A549 (cell line): ENCODE measurements at regions of chr5 and their contacts with region 1.

Region 1: GRCh38 chr5:39080597-39081204 is 6.5 kb upstream of the RICTOR start:
- DNase-seq: peak; percentile 64 to 92
- ATAC-seq: peak; percentile 62 to 74; a peak in 4 of 6 replicates
- H3K4me3 ChIP-seq: no peak overlapping the region
- H3K27ac ChIP-seq: peak overlapping the region; percentile 11 to 57; a peak in 5 of 6 replicates
- H3K4me1 ChIP-seq: peaks cover 45% of the 10 kb centered on the region
- CTCF ChIP-seq: peak; percentile 81
- EP300 ChIP-seq: no peak
- POLR2A ChIP-seq: no peak
- RAD21 ChIP-seq: peak; percentile 71 to 79

Region 2: GRCh38 chr5:39005566-39006232 is 75.0 kb before region 1 on chr5:
- CTCF ChIA-PET with region 1: interaction called, 33 read pairs
- POLR2A ChIA-PET with region 1: no interaction called
- DNase-seq: peak; percentile 6 to 68
- ATAC-seq: peak; percentile 90 to 94; a peak in 5 of 6 replicates
- H3K4me3 ChIP-seq: no peak overlapping the region
- H3K27ac ChIP-seq: no peak overlapping the region
- H3K4me1 ChIP-seq: no peaks in the 10 kb centered on the region
- CTCF ChIP-seq: peak; percentile 66
- EP300 ChIP-seq: no peak
- POLR2A ChIP-seq: no peak
- RAD21 ChIP-seq: peak; percentile 74 to 76

Region 3: GRCh38 chr5:39053189-39053588 is 27.5 kb before region 1 on chr5:
- CTCF ChIA-PET with region 1: no interaction called
- POLR2A ChIA-PET with region 1: no interaction called
- DNase-seq: no peak
- ATAC-seq: no peak
- H3K4me3 ChIP-seq: no peak overlapping the region
- H3K27ac ChIP-seq: no peak overlapping the region
- H3K4me1 ChIP-seq: peaks cover 32% of the 10 kb centered on the region; the same call in 2 of the 3 replicates
- CTCF ChIP-seq: no peak
- EP300 ChIP-seq: no peak
- POLR2A ChIP-seq: no peak
- RAD21 ChIP-seq: no peak

Region 4: DNA sequence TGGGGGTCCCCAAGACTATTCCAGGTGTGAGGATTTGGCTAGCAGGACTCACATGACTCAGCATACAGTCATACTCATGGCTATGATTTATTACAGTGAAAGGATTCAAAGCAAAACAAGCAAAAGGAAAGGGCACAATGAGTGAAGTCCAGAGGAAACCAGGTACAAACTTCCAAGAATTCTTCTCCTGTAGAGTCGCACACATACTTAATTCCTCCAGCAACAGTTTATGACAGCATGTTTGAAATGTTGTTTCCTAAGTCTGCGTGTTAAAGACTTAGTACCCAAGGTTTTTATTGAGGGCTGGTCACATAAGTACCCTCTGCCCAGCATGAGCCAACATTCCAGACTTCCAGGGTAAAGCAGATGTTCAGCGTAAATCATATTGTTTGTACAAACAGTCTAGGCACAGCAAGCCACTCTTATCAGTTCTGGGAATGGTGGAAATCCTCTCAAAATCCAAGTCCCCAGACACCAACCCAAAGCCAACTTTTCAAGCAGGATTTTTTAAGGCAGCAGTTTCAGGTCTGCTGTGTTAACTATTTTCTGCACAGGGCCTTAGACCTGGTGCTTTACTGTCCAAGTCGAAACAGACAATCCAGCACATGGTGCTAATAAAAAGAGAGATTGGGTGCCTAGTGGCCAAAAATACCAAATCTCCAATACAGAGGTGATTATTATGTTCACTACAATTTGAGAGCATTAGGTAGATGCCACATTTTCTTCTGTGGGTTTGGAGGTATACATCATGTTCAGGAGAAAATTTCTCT is 12.1 kb after region 1 on chr5:
- CTCF ChIA-PET with region 1: interaction called, 110 read pairs
- POLR2A ChIA-PET with region 1: interaction called, 3 read pairs
- DNase-seq: peak in 1 of 2 experiments; percentile 71
- ATAC-seq: peak; percentile 75 to 86
- H3K4me3 ChIP-seq: no peak overlapping the region
- H3K27ac ChIP-seq: peak overlapping the region; percentile 81 to 84
- H3K4me1 ChIP-seq: peaks cover 21% of the 10 kb centered on the region
- CTCF ChIP-seq: no peak
- EP300 ChIP-seq: peak; percentile 5 to 49; a peak in 2 of 5 replicates
- POLR2A ChIP-seq: no peak
- RAD21 ChIP-seq: no peak

Region 5: DNA sequence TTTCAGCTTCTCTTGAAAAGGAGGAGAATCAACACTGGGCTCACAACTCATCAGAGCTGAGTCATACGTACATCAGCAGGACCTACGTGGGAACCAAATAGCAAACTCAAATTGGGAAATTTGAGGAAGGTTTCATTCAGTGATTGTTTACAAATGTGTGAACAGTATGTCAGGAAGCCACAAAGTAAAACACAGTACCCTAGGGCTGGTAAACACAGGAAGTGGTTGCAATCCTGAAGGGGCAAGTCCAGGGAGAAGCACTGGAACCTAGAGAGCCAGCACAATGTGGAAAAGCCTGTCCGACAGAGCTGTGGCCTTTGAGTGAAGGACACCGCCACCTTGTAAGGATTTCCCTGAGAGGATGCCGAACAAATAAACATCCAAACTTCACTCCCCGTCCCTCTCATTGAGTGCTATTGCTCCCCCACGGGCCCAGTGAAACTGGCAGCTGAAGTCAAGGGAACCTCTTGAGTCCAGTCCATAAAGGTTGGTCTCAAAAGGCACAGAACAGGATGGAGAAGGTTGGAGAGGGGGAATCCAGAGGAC is 20.2 kb after region 1 on chr5:
- CTCF ChIA-PET with region 1: interaction called, 110 read pairs
- POLR2A ChIA-PET with region 1: interaction called, 13 read pairs
- DNase-seq: peak; percentile 93 to 99
- ATAC-seq: peak; percentile 82 to 95
- H3K4me3 ChIP-seq: no peak overlapping the region
- H3K27ac ChIP-seq: peak overlapping the region; percentile 90 to 95
- H3K4me1 ChIP-seq: peaks cover 57% of the 10 kb centered on the region
- CTCF ChIP-seq: no peak
- EP300 ChIP-seq: peak; percentile 98
- POLR2A ChIP-seq: no peak
- RAD21 ChIP-seq: peak; percentile 41 to 63

Region 6: GRCh38 chr5:39106322-39106721 is 25.6 kb after region 1 on chr5:
- CTCF ChIA-PET with region 1: interaction called, 110 read pairs
- POLR2A ChIA-PET with region 1: interaction called, 13 read pairs
- DNase-seq: peak in 1 of 2 experiments; percentile 43
- ATAC-seq: no peak
- H3K4me3 ChIP-seq: no peak overlapping the region
- H3K27ac ChIP-seq: peak overlapping the region in 1 of 2 experiments; percentile 63; a peak in 4 of 6 replicates
- H3K4me1 ChIP-seq: peaks cover 62% of the 10 kb centered on the region
- CTCF ChIP-seq: peak; percentile 69
- EP300 ChIP-seq: no peak
- POLR2A ChIP-seq: no peak
- RAD21 ChIP-seq: peak; percentile 56 to 71

Region 7: GRCh38 chr5:39119404-39120051 is 38.8 kb after region 1 on chr5:
- CTCF ChIA-PET with region 1: interaction called, 12 read pairs
- POLR2A ChIA-PET with region 1: interaction called, 3 read pairs
- DNase-seq: no peak
- ATAC-seq: no peak; a peak in 1 of 6 replicates
- H3K4me3 ChIP-seq: no peak overlapping the region; the same call in 2 of the 3 replicates
- H3K27ac ChIP-seq: peak overlapping the region in 1 of 2 experiments; percentile 59; a peak in 3 of 6 replicates
- H3K4me1 ChIP-seq: peaks cover 49% of the 10 kb centered on the region; the same call in 2 of the 3 replicates
- CTCF ChIP-seq: no peak
- EP300 ChIP-seq: no peak
- POLR2A ChIP-seq: no peak
- RAD21 ChIP-seq: no peak

Region 8: GRCh38 chr5:39138892-39139291 is 58.2 kb after region 1 on chr5:
- CTCF ChIA-PET with region 1: interaction called, 13 read pairs
- POLR2A ChIA-PET with region 1: no interaction called
- DNase-seq: peak; percentile 51 to 88
- ATAC-seq: peak; percentile 87
- H3K4me3 ChIP-seq: no peak overlapping the region
- H3K27ac ChIP-seq: peak overlapping the region in 1 of 2 experiments; percentile 71; a peak in 3 of 6 replicates
- H3K4me1 ChIP-seq: peaks cover 39% of the 10 kb centered on the region
- CTCF ChIP-seq: no peak
- EP300 ChIP-seq: peak in 1 of 2 experiments; percentile 82; a peak in 1 of 5 replicates
- POLR2A ChIP-seq: no peak
- RAD21 ChIP-seq: peak; percentile 24 to 58; a peak in 4 of 5 replicates